Left ventricle myocardium inferior (tissue), 1 donor: ENCODE measurements at regions of chr17 and their contacts with region 1.

Region 1: GRCh38 chr17:48724251-48725003 is 1.4 kb downstream of the PRAC2 start:
- DNase-seq: peak; percentile 80
- H3K4me3 ChIP-seq: peak overlapping the region; percentile 27
- H3K27ac ChIP-seq: no peak overlapping the region
- H3K4me1 ChIP-seq: peaks cover 45% of the 10 kb centered on the region
- H3K27me3 ChIP-seq: peaks cover 100% of the 10 kb centered on the region
- CTCF ChIP-seq: peak; percentile 77

Region 2: GRCh38 chr17:48791128-48792032 is 67.0 kb after region 1 on chr17:
- intact Hi-C with region 1: loop called (anchors 1 kb)
- DNase-seq: peak; percentile 56
- H3K4me3 ChIP-seq: no peak overlapping the region
- H3K27ac ChIP-seq: no peak overlapping the region
- H3K4me1 ChIP-seq: peaks cover 9% of the 10 kb centered on the region
- H3K27me3 ChIP-seq: peaks cover 94% of the 10 kb centered on the region
- CTCF ChIP-seq: peak; percentile 82